ENCODE measurements at regions of chrX and their contacts with region 1.

Region 1: DNA sequence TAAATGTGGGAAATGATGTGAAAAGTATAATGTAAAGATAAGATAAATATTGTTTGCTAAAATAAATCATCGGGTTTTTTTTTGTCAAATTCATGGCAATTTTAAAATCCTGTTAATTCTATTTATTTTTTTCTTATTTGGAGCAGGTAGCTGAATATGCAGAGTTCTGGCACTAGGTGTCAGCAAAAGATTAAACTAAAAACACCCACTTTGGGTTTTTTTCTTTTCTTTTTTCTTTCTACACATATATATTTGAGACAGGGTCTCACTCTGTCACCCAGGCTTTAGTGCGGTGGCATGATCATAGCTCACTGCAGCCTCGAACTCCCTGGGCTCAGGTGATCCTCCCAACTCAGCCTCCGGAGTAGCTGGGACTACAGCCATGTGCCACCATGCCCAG is 6.9 kb upstream of the RAP2C start:
- DNase-seq: no peak
- H3K4me3 ChIP-seq: no peak overlapping the region
- CTCF ChIP-seq: no peak
- POLR2A ChIP-seq: no peak

Region 2: DNA sequence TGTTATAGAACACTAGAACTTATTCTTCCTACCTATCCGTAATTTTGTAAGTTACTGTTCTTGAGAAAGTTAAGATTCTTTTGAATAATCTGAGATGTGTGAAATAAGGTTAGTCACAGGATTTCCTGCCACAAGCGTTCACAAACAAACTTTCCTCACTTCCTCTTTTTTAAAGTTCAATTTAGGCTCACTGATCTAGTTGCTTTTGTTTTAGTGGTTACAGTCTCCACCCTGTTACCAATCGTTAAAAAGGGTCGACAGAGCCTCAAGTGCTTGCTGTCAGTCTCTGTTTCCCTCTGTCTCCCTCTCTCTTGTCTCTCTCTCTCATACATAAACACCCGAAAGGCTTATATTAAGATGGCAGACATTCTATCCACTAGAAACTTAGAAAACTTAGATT is 238.9 kb before region 1 on chrX:
- intact Hi-C with region 1: no loop called
- DNase-seq: no peak
- H3K4me3 ChIP-seq: no peak overlapping the region
- CTCF ChIP-seq: no peak
- POLR2A ChIP-seq: no peak

Region 3: GRCh38 chrX:132612821-132613564 is 386.8 kb after region 1 on chrX:
- intact Hi-C with region 1: loop called (anchors 10 kb)
- DNase-seq: no peak
- H3K4me3 ChIP-seq: no peak overlapping the region
- CTCF ChIP-seq: no peak
- POLR2A ChIP-seq: no peak